PC-9 (cell line): ENCODE measurements at regions of chrX and their contacts with region 1.

Region 1: DNA sequence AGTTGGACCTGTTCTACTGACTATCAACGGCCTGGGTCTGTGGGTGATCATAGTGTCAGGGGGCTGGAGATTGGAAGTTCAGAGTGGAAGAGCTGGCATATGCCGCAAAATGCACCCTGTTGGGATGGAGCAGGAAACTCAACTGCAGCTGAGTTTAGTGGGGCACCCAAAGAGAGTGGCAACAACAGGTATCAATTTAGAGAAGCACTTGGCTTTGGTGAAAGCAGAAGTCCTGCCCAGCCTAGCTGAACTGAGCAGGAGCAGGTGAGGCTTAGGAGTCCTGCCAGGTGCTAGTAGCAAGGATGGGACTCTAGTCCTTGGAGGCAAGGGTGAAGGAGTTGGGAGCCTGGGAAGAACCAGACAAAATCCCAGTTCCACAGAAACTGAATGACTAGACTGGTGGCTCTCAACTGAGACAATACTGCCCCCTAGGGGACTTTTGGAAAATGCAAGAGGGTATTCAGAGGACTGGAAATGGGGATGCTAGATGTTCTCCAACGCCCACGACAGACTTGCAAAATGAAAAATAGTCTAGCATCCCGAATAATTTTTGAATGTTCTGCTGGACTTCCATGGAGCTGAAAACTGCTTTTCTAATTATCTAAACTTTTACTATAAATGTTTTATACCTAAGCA is 49.4 kb downstream of the RTL9 start:
- DNase-seq: peak; percentile 54 to 67
- H3K4me3 ChIP-seq: no peak overlapping the region
- H3K27ac ChIP-seq: no peak overlapping the region
- H3K4me1 ChIP-seq: peaks cover 47% of the 10 kb centered on the region
- H3K27me3 ChIP-seq: no peaks in the 10 kb centered on the region
- CTCF ChIP-seq: peak; percentile 94

Region 2: GRCh38 chrX:110086916-110087484 is 321.0 kb before region 1 on chrX:
- CTCF ChIA-PET with region 1: interaction called, 3 read pairs
- POLR2A ChIA-PET with region 1: interaction called, 4 read pairs
- intact Hi-C with region 1: loop called (anchors 5 kb)
- DNase-seq: peak; percentile 51 to 99
- H3K4me3 ChIP-seq: peak overlapping the region; percentile 55; the same call in 1 of the 2 replicates
- H3K27ac ChIP-seq: peak overlapping the region; percentile 99
- H3K4me1 ChIP-seq: peaks cover 55% of the 10 kb centered on the region
- H3K27me3 ChIP-seq: no peaks in the 10 kb centered on the region
- CTCF ChIP-seq: 0 out of 2 replicates have a peak, but pooled peaks have one; percentile 15

Region 3: GRCh38 chrX:110163488-110163887 is 244.5 kb before region 1 on chrX:
- CTCF ChIA-PET with region 1: interaction called, 12 read pairs
- POLR2A ChIA-PET with region 1: interaction called, 7 read pairs
- intact Hi-C with region 1: loop called (anchors 1 kb)
- DNase-seq: peak in 1 of 2 experiments; percentile 80
- H3K4me3 ChIP-seq: no peak overlapping the region; the same call in 1 of the 2 replicates
- H3K27ac ChIP-seq: peak overlapping the region; percentile 75
- H3K4me1 ChIP-seq: peaks cover 49% of the 10 kb centered on the region
- H3K27me3 ChIP-seq: no peaks in the 10 kb centered on the region
- CTCF ChIP-seq: no peak

Region 4: GRCh38 chrX:110346681-110347080 is 61.3 kb before region 1 on chrX:
- CTCF ChIA-PET with region 1: no interaction called
- POLR2A ChIA-PET with region 1: no interaction called
- intact Hi-C with region 1: loop called (anchors 1 kb)
- DNase-seq: peak in 1 of 2 experiments; percentile 14
- H3K4me3 ChIP-seq: no peak overlapping the region
- H3K27ac ChIP-seq: no peak overlapping the region
- H3K4me1 ChIP-seq: peaks cover 2% of the 10 kb centered on the region
- H3K27me3 ChIP-seq: no peaks in the 10 kb centered on the region
- CTCF ChIP-seq: no peak